Activated naive CD8-positive, alpha-beta T cell treated with anti-CD3 and anti-CD28 coated beads, Interleukin-2, amount 10 ng/mL, durations not matched to agents 7 days and 5 days (primary cell): ENCODE measurements at regions of chr17 and their contacts with region 1.

Region 1: DNA sequence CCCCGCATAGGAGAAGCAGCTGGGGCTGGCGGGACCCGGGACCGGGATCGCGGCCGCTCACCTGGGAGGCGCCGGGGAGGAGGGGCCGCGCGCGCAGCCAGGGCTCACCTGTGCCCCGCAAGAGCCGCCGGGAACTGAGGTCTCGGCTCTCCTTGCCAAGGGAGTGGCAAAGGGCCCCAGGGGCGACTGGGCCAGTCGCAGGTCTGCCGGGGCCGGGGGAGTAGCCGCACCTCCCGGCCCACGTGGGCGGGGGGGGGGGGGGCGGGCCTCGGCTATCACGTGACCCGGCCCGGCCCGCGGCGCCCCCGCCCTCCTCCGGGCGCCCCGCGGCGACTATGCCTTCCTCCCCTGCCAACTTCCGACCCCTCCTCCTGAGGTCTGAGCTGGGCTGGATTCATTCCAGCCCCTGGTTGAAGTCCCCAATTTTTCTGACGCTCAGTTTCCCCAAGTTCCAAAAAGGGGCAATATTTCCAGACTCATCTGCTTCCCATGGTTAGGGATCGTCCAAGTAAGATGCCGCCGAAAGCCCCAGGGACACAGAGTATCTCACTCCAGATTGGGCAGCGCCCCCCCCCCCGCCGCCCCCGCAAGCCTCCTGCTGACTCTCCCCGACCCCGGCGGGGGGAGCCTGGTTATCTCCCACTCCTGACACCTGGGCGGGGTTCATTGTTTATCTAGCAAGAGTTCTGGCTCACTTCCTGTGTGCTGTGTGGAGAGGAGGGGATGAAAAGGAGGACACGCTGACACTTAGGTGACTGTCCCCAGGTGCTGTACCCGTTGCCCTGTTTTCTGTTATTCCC is at the start of gene TMC6:
- DNase-seq: peak; percentile 83
- ATAC-seq: peak; percentile 15
- H3K4me3 Mint-ChIP-seq: peak within 1 kb of the TSS; percentile 99
- H3K27ac Mint-ChIP-seq: peak within 1 kb of the TSS; percentile 100
- H3K4me1 Mint-ChIP-seq: peaks cover 29% of the 10 kb centered on the region
- H3K27me3 Mint-ChIP-seq: no peaks in the 10 kb centered on the region
- total RNA-seq, gene TMC6: 638 to 646 TPM

Region 2: GRCh38 chr17:78140169-78140976 is 11.6 kb after region 1 on chr17:
- POLR2A ChIA-PET with region 1: interaction called, 380 read pairs
- DNase-seq: peak; percentile 97
- ATAC-seq: peak; percentile 73
- H3K4me3 Mint-ChIP-seq: peak overlapping the region; percentile 22
- H3K27ac Mint-ChIP-seq: peak overlapping the region; percentile 68
- H3K4me1 Mint-ChIP-seq: peaks cover 45% of the 10 kb centered on the region
- H3K27me3 Mint-ChIP-seq: no peaks in the 10 kb centered on the region